PC-9 (cell line): ENCODE measurements at regions of chr21 and their contacts with region 1.

Region 1: DNA sequence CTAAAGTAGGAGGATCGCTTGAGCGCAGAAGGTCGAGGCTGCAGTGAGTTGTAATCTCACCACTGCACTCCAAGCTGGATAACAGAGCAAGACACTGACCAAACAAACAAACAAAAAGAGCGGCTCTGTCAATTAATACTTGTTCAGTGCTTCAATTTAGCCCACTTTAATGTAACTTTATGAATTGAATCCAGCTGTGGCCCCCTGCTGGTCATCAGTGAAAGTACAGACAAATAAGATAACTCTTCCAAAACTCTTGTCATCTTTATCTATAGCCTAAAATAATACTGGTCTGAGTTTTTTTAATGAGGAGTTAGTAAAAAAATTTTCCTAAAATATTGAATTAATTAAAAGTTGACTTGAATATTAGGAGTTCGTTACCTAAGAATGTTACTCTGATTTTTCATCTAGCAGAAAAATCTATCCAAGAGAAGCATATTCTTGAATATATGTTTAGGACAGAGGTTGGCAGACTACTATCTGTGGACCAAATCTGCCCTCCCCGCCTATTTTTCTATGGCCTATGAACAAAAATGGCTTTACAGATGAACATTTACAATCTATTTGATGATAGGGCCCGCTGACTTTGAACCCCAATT is 26.1 kb downstream of the ATP5PF start:
- DNase-seq: no peak
- H3K4me3 ChIP-seq: no peak overlapping the region
- H3K27ac ChIP-seq: no peak overlapping the region
- H3K4me1 ChIP-seq: no peaks in the 10 kb centered on the region
- H3K27me3 ChIP-seq: no peaks in the 10 kb centered on the region
- CTCF ChIP-seq: peak; percentile 87

Region 2: GRCh38 chr21:25539606-25540005 is 169.0 kb before region 1 on chr21:
- CTCF ChIA-PET with region 1: no interaction called
- POLR2A ChIA-PET with region 1: no interaction called
- intact Hi-C with region 1: no loop called
- DNase-seq: no peak
- H3K4me3 ChIP-seq: no peak overlapping the region
- H3K27ac ChIP-seq: no peak overlapping the region
- H3K4me1 ChIP-seq: no peaks in the 10 kb centered on the region
- H3K27me3 ChIP-seq: no peaks in the 10 kb centered on the region
- CTCF ChIP-seq: no peak

Region 3: GRCh38 chr21:26495283-26495845 is 786.8 kb after region 1 on chr21:
- CTCF ChIA-PET with region 1: interaction called, 12 read pairs
- POLR2A ChIA-PET with region 1: no interaction called
- intact Hi-C with region 1: no loop called
- DNase-seq: no peak
- H3K4me3 ChIP-seq: no peak overlapping the region
- H3K27ac ChIP-seq: no peak overlapping the region
- H3K4me1 ChIP-seq: no peaks in the 10 kb centered on the region
- H3K27me3 ChIP-seq: no peaks in the 10 kb centered on the region
- CTCF ChIP-seq: no peak